Activated B cell treated with CpG ODN at 0.5 μM for 24 hours (primary cell): ENCODE measurements at regions of chr20 and their contacts with region 1.

Region 1: DNA sequence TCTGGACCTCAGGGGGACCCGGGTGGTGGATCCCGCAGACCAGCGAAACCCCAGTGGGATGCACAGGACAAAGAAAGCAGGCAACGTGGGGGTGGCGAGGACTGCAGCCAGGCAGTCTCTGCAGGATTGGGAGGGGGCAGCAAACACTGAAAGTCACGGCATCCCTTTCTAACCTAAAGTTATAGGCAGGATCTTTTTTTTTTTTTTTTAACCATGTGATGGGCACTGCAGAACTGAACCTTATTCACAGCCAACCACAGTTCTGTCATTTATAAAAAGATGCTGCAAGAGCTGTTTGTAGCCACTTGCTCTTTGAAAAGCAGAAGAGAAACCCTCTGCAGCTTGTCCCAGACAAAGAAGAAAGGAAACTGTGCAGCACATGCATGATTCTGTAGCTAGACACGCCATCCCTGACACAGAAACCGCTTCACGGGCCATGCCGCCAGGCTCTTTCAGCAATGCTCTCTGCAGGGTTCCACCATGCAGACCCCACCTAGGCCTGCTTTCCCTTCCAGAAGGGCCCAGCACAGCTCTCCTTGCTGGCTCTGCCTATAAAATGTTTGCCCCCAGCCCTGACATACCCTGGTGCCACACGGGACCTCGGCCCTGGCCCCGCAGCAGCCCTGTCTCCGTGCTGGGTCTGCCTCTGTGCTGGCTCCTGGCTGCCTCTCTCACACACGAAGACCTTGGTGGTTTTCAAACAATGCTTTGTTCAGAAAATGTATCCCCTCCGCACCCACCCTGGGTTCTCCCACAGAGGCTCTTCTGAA is 70.8 kb downstream of the PYGB start:
- DNase-seq: peak; percentile 24
- ATAC-seq: peak; percentile 93
- H3K4me3 Mint-ChIP-seq: peak overlapping the region; percentile 52
- H3K27ac Mint-ChIP-seq: peak overlapping the region; percentile 87
- H3K4me1 Mint-ChIP-seq: peaks cover 39% of the 10 kb centered on the region
- H3K27me3 Mint-ChIP-seq: no peaks in the 10 kb centered on the region
- CTCF ChIP-seq: no peak

Region 2: DNA sequence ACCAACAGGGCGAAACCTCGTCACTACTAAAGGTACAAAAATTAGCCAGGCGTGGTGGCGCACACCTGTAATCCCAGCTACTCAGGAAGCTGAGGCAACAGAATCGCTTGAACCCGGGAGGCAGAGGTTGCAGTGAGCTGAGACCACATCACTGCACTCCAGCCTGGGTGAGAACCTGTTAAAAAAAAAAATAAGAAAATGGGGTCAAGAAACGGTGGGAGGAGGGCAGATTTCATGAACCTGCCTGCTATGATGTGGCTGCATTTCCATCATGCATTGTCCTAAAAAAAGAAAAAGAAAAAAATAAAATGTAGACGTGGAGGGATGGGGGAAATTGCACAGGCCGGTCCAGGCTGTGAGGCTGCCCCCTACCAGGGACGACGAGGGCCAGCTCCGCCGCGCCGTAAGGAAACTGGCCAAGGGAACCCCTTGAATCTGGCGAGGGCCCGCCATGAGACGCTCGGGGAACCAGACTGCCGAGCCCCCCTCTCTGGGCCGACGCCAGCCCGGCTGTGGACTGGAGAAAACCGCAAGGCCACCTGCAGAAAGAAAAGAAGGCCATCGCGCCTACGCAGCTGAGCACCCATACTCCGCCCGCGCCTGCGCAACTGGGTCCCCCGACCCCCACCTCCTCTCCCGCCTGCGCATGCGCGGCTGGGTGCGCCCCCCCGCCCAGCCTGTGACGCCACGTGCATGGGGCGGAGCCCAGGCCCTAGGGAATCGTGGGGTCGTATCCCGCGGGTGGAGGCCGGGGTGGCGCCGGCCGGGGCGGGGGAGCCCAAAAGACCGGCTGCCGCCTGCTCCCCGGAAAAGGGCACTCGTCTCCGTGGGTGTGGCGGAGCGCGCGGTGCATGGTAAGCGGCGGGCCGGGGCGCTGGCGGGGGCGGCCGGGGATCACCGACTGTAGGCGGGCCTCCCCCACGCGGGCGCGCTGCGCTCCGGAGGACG is 123.4 kb before region 1 on chr20 and contains the start of gene ENTPD6:
- CTCF ChIA-PET with region 1: no interaction called
- POLR2A ChIA-PET with region 1: no interaction called
- intact Hi-C with region 1: loop called (anchors 1 kb)
- DNase-seq: peak; percentile 99
- ATAC-seq: peak; percentile 82
- H3K4me3 Mint-ChIP-seq: peak within 1 kb of the TSS; percentile 90
- H3K27ac Mint-ChIP-seq: peak within 1 kb of the TSS; percentile 86
- H3K4me1 Mint-ChIP-seq: peaks cover 20% of the 10 kb centered on the region
- H3K27me3 Mint-ChIP-seq: no peaks in the 10 kb centered on the region
- CTCF ChIP-seq: no peak
- total RNA-seq, gene ENTPD6: 37.2 and 44.4 TPM in 2 replicates

Region 3: GRCh38 chr20:25336561-25337422 is 18.1 kb after region 1 on chr20:
- CTCF ChIA-PET with region 1: no interaction called
- POLR2A ChIA-PET with region 1: no interaction called
- intact Hi-C with region 1: no loop called
- DNase-seq: no peak
- ATAC-seq: no peak
- H3K4me3 Mint-ChIP-seq: no peak overlapping the region
- H3K27ac Mint-ChIP-seq: no peak overlapping the region
- H3K4me1 Mint-ChIP-seq: no peaks in the 10 kb centered on the region
- H3K27me3 Mint-ChIP-seq: no peaks in the 10 kb centered on the region
- CTCF ChIP-seq: no peak